ENCODE measurements at regions of chr9 and their contacts with region 1.

Region 1: GRCh38 chr9:71716138-71716909 is 52.0 kb downstream of the CEMIP2 start:
- DNase-seq: peak; percentile 30
- H3K4me3 ChIP-seq: no peak overlapping the region
- H3K27ac ChIP-seq: no peak overlapping the region
- H3K4me1 ChIP-seq: no peaks in the 10 kb centered on the region
- H3K27me3 ChIP-seq: no peaks in the 10 kb centered on the region
- CTCF ChIP-seq: peak in 1 of 2 donors; percentile 20
- POLR2A ChIP-seq: no peak

Region 2: DNA sequence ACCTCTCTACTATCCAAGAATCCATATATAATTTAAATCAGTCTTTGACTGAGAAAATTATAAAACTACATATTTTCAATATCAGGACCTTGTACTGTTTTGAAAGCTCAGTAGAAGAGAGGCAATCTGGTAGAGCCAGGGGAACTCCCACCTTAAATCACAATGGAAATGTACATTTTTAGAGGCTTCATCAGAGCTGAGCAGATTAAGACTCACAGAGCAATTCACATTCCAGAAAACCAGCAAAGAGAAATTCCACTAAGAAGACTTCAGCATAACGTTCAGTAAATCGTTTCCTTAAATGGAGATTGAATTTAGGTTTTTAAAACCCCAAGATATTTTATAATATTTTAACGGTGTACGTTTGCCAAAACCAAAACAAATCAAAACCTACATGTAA is 367.1 kb before region 1 on chr9:
- CTCF ChIA-PET with region 1: no interaction called
- POLR2A ChIA-PET with region 1: no interaction called
- dilution Hi-C with region 1: no loop called
- intact Hi-C with region 1: no loop called
- DNase-seq: no peak
- H3K4me3 ChIP-seq: no peak overlapping the region
- H3K27ac ChIP-seq: no peak overlapping the region
- H3K4me1 ChIP-seq: no peaks in the 10 kb centered on the region
- H3K27me3 ChIP-seq: no peaks in the 10 kb centered on the region
- CTCF ChIP-seq: no peak
- POLR2A ChIP-seq: no peak

Region 3: GRCh38 chr9:71604197-71605063 is 111.9 kb before region 1 on chr9:
- CTCF ChIA-PET with region 1: interaction called, 77 read pairs
- POLR2A ChIA-PET with region 1: no interaction called
- dilution Hi-C with region 1: no loop called
- intact Hi-C with region 1: loop called (anchors 1 kb)
- DNase-seq: peak; percentile 65
- H3K4me3 ChIP-seq: no peak overlapping the region
- H3K27ac ChIP-seq: no peak overlapping the region
- H3K4me1 ChIP-seq: no peaks in the 10 kb centered on the region
- H3K27me3 ChIP-seq: no peaks in the 10 kb centered on the region
- CTCF ChIP-seq: peak; percentile 74 to 80
- POLR2A ChIP-seq: no peak

Region 4: DNA sequence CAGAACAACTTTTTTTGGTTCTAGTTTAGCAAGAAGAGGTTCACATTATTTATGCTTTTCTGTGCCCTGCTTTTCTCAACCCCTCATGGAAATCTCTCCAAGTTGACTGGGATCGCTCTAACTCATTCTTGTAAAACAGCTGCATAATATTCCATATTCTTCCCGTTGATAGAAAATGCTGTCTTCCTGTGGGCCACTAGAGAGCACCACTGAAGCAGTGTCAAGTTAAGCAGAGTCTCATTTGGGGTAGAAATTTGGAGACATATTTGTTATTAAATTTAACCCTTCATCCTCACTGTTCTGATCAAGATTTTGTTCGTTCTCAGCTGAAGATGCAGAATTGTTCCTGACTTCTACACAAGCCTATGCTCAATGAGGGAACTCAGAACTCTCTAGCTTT is 88.1 kb before region 1 on chr9:
- CTCF ChIA-PET with region 1: interaction called, 41 read pairs
- POLR2A ChIA-PET with region 1: no interaction called
- dilution Hi-C with region 1: no loop called
- intact Hi-C with region 1: no loop called
- DNase-seq: no peak
- H3K4me3 ChIP-seq: no peak overlapping the region
- H3K27ac ChIP-seq: no peak overlapping the region
- H3K4me1 ChIP-seq: peaks cover 20% of the 10 kb centered on the region
- H3K27me3 ChIP-seq: no peaks in the 10 kb centered on the region
- CTCF ChIP-seq: no peak
- POLR2A ChIP-seq: no peak

Region 5: GRCh38 chr9:71647094-71647591 is 69.2 kb before region 1 on chr9:
- CTCF ChIA-PET with region 1: interaction called, 26 read pairs
- POLR2A ChIA-PET with region 1: no interaction called
- dilution Hi-C with region 1: no loop called
- intact Hi-C with region 1: no loop called
- DNase-seq: peak; percentile 93
- H3K4me3 ChIP-seq: peak overlapping the region in 1 of 3 experiments; percentile 15
- H3K27ac ChIP-seq: peak overlapping the region; percentile 52
- H3K4me1 ChIP-seq: peaks cover 24% of the 10 kb centered on the region
- H3K27me3 ChIP-seq: no peaks in the 10 kb centered on the region
- CTCF ChIP-seq: no peak
- POLR2A ChIP-seq: no peak

Region 6: DNA sequence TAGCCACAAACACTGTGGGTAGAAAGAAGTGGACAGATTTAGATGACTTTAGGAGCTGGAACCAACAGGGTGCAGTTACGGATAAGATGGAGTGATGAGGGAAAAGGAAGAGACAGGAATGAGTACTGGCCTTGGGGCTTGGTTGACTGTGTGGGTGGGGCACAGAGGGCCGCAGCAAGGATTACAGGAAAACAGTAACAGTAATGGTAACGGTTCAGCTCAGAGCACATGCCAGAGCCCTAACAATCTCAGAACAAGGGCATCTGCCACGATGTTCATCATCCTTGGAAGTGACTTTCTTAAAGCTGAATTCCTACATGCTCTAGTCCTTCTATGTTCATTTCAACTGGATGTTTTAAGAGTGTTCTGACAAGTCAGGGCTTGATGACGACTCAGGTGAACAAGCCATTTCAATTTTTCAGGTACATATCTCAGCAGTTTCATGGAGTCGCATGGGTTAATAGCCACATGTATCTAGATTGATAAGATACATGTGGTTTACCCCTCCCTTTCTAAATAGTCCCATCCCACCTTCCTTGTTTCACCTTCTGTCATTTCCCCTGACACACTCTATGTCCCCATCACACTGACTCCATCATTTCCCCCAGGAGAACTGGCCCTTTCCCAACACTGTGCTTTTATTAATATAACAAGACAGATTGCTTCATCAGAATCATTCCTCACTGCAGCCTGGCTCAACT is 13.0 kb before region 1 on chr9:
- CTCF ChIA-PET with region 1: interaction called, 10 read pairs
- POLR2A ChIA-PET with region 1: interaction called, 3 read pairs
- dilution Hi-C with region 1: no loop called
- intact Hi-C with region 1: no loop called
- DNase-seq: no peak
- H3K4me3 ChIP-seq: no peak overlapping the region
- H3K27ac ChIP-seq: no peak overlapping the region
- H3K4me1 ChIP-seq: no peaks in the 10 kb centered on the region
- H3K27me3 ChIP-seq: no peaks in the 10 kb centered on the region
- CTCF ChIP-seq: no peak
- POLR2A ChIP-seq: no peak

Region 7: DNA sequence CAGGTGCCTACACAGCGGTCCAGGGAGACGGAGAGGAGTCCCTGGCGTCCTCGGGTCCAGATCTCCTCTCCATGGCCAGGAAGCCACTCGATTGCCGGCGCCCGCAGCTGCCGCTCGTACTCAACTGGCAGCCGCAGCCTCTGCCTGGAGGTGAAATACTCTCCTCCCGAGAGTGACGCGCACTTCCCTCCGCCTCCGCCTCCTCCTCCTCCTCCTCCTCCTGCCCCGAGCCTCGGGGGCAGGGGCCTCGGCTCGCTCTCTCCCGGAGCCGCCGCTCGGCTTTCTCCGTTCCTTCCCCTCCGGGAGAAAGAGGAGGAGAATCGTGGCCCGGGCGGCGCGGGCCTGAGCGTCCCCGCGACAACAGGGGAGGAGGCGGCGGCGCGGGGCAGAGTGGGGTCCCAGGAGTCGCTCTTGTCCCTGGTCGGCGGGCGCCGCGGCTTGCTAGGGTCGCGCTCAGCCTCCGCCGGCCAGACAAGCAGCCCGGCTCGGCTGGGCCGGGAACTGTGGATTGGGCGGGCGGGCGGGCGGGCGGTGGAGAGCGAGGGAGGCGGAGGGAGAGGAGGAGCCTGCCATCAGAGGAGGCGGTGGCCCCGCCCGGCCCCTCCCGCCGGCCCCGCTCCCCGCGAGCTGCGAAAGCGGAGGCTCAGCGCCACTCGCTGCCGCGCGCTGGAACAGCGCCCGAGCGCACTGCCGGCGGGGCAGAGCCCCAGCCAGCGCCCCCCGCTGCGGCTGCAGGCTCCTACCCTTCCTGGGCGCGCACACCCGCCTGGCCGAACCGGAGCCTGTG is 52.3 kb after region 1 on chr9 and contains the start of gene CEMIP2:
- CTCF ChIA-PET with region 1: interaction called, 58 read pairs
- POLR2A ChIA-PET with region 1: no interaction called
- dilution Hi-C with region 1: no loop called
- intact Hi-C with region 1: loop called (anchors 2 kb)
- DNase-seq: peak; percentile 89
- H3K4me3 ChIP-seq: peak within 1 kb of the TSS; percentile 97 to 98 (median 98)
- H3K27ac ChIP-seq: peak within 1 kb of the TSS; percentile 91
- H3K4me1 ChIP-seq: peaks cover 33% of the 10 kb centered on the region
- H3K27me3 ChIP-seq: no peaks in the 10 kb centered on the region
- CTCF ChIP-seq: peak; percentile 41 to 67
- POLR2A ChIP-seq: peak; percentile 98
- total RNA-seq, gene CEMIP2: 44.3 and 47.5 TPM in 2 replicates